Caco-2 (cell line): ENCODE measurements at regions of chr2 and their contacts with region 1.

Region 1: DNA sequence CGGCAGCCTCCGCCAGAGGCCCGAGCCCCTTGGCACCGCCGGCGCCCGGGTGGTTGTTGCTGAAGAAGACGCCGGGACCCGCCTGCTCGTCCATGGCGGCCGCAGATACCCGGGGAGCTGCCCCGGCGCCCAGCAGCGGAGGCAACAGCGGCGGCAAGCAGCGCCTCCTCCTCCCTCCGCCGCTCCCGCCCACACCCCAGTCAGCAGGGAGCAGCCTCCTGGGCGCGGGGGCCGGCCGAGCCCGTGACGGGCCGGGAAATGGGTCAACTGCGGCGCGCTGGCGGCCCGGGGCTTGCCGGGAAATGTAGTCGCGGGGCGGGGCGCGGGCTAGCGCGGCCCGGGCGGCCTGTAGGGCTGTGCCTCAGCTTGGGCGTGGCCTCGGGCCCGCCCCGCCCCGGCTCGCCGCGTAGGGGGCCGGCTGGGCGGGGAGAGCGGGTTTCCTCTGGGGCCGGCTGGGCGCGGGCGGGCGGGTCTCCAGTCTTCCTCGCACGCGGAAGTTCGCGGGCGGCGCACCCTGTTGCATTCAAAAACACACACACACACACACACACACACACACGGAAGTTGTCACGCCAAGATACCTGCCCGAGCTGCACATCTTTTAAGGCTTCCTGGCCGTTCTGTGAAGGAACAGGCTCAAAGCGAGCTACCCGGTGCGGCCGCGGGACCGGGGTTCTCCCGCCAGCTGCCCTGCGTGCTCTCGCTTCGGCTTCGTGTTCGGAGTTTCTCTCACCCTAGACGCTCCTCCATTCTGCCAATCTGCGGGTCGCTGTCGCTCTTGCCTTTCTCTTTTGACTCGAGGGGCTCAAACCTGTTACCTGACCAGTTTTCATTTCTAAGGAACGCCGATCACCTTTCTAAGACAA is at the start of gene STRN:
- DNase-seq: peak; percentile 96 to 99
- H3K4me3 ChIP-seq: peak within 1 kb of the TSS; percentile 91
- H3K4me3 Mint-ChIP-seq: peak within 1 kb of the TSS; percentile 98
- H3K27ac Mint-ChIP-seq: peak within 1 kb of the TSS; percentile 83
- H3K4me1 ChIP-seq: peaks cover 34% of the 10 kb centered on the region
- H3K4me1 Mint-ChIP-seq: peaks cover 29% of the 10 kb centered on the region
- H3K27me3 ChIP-seq: no peaks in the 10 kb centered on the region
- H3K27me3 Mint-ChIP-seq: no peaks in the 10 kb centered on the region
- CTCF ChIP-seq: no peak
- total RNA-seq, gene STRN: 36.8 and 38.9 TPM in 2 replicates

Region 2: DNA sequence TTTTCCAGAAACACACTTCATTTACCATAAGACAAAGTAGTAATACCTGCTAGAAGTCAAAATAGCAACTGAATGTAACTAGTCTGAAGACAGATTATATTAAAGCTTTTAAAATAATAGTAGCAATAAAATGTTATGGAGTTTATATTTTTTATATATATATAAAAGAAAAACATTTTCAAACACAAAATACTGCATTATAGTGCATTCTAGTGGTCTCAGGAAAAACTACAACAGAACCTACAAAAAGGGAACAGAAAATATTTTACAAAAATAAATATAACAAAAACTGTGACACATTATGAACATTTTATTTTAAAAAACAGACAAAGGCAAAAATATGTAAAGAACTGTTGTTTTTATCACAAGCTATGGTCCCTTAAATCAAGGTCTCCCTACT is 48.3 kb before region 1 on chr2:
- CTCF ChIA-PET with region 1: interaction called, 5 read pairs
- POLR2A ChIA-PET with region 1: interaction called, 18 read pairs
- intact Hi-C with region 1: loop called (anchors 1 kb)
- DNase-seq: no peak
- H3K4me3 ChIP-seq: no peak overlapping the region
- H3K4me3 Mint-ChIP-seq: no peak overlapping the region
- H3K27ac Mint-ChIP-seq: peak overlapping the region; percentile 80
- H3K4me1 ChIP-seq: peaks cover 30% of the 10 kb centered on the region
- H3K4me1 Mint-ChIP-seq: peaks cover 22% of the 10 kb centered on the region
- H3K27me3 ChIP-seq: no peaks in the 10 kb centered on the region
- H3K27me3 Mint-ChIP-seq: no peaks in the 10 kb centered on the region
- CTCF ChIP-seq: peak in 1 of 2 experiments; percentile 21

Region 3: GRCh38 chr2:36988008-36988407 is 21.4 kb after region 1 on chr2:
- CTCF ChIA-PET with region 1: no interaction called
- POLR2A ChIA-PET with region 1: no interaction called
- intact Hi-C with region 1: loop called (anchors 2 kb)
- DNase-seq: no peak
- H3K4me3 ChIP-seq: no peak overlapping the region
- H3K4me3 Mint-ChIP-seq: no peak overlapping the region
- H3K27ac Mint-ChIP-seq: no peak overlapping the region
- H3K4me1 ChIP-seq: no peaks in the 10 kb centered on the region
- H3K4me1 Mint-ChIP-seq: no peaks in the 10 kb centered on the region
- H3K27me3 ChIP-seq: no peaks in the 10 kb centered on the region
- H3K27me3 Mint-ChIP-seq: no peaks in the 10 kb centered on the region
- CTCF ChIP-seq: no peak

Region 4: DNA sequence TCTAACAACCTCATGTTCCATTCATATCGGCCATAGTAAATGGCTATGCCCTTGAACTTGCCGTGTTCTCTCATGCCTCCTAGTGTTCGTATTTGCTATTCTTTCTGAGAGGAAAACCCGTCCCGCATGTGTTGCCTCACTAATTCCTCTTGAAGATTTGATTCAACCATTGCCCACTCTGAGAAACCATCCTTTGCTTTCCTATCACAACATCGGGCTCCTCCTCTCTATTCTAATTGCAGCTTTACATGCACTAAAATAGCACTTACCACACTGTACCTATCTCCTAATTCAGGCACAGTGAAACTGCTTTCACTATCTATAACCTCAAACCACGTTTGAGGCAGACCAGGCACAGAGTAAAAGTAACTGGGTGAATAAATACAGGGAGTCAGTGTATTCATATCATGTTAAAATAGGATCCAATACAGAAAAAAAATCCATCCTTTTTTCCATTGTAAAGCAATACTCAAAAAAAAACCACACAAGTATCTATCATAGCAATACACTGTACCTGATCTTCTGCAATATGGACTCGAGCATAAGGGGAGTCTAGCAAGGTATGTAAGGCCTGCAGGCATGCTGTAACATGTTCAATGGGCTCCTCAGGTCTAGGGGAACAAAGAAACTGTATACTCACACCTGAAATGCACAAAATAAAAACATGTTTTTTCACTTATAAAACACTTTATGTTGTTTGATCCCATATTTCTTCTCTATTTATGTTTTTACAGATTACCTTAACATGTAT is 38.7 kb after region 1 on chr2:
- CTCF ChIA-PET with region 1: no interaction called
- POLR2A ChIA-PET with region 1: no interaction called
- intact Hi-C with region 1: loop called (anchors 2 kb)
- DNase-seq: peak in 1 of 2 experiments; percentile 56
- H3K4me3 ChIP-seq: no peak overlapping the region
- H3K4me3 Mint-ChIP-seq: no peak overlapping the region
- H3K27ac Mint-ChIP-seq: no peak overlapping the region
- H3K4me1 ChIP-seq: no peaks in the 10 kb centered on the region
- H3K4me1 Mint-ChIP-seq: no peaks in the 10 kb centered on the region
- H3K27me3 ChIP-seq: no peaks in the 10 kb centered on the region
- H3K27me3 Mint-ChIP-seq: no peaks in the 10 kb centered on the region
- CTCF ChIP-seq: peak; percentile 55 to 59

Region 5: GRCh38 chr2:37026050-37026449 is 59.4 kb after region 1 on chr2:
- CTCF ChIA-PET with region 1: no interaction called
- POLR2A ChIA-PET with region 1: no interaction called
- intact Hi-C with region 1: no loop called
- DNase-seq: peak in 1 of 2 experiments; percentile 25
- H3K4me3 ChIP-seq: no peak overlapping the region
- H3K4me3 Mint-ChIP-seq: no peak overlapping the region
- H3K27ac Mint-ChIP-seq: no peak overlapping the region
- H3K4me1 ChIP-seq: no peaks in the 10 kb centered on the region
- H3K4me1 Mint-ChIP-seq: no peaks in the 10 kb centered on the region
- H3K27me3 ChIP-seq: no peaks in the 10 kb centered on the region
- H3K27me3 Mint-ChIP-seq: no peaks in the 10 kb centered on the region
- CTCF ChIP-seq: peak; percentile 13 to 18

Region 6: GRCh38 chr2:37083873-37084794 is 117.5 kb after region 1 on chr2 and contains the starts of genes GPATCH11 and HEATR5B:
- CTCF ChIA-PET with region 1: no interaction called
- POLR2A ChIA-PET with region 1: interaction called, 3 read pairs
- intact Hi-C with region 1: loop called (anchors 5 kb)
- DNase-seq: peak; percentile 98 to 99
- H3K4me3 ChIP-seq: peak within 1 kb of the TSS; percentile 78
- H3K4me3 Mint-ChIP-seq: no peak within 1 kb of the TSS
- H3K27ac Mint-ChIP-seq: no peak within 1 kb of the TSS
- H3K4me1 ChIP-seq: peaks cover 16% of the 10 kb centered on the region
- H3K4me1 Mint-ChIP-seq: peaks cover 8% of the 10 kb centered on the region
- H3K27me3 ChIP-seq: no peaks in the 10 kb centered on the region
- H3K27me3 Mint-ChIP-seq: no peaks in the 10 kb centered on the region
- CTCF ChIP-seq: no peak
- total RNA-seq, gene GPATCH11: 7.5 and 8.3 TPM in 2 replicates
- total RNA-seq, gene HEATR5B: 15.3 and 16.1 TPM in 2 replicates